CD4-positive, alpha-beta T cell (primary cell): ENCODE measurements at regions of chr22 and their contacts with region 1.

Region 1: DNA sequence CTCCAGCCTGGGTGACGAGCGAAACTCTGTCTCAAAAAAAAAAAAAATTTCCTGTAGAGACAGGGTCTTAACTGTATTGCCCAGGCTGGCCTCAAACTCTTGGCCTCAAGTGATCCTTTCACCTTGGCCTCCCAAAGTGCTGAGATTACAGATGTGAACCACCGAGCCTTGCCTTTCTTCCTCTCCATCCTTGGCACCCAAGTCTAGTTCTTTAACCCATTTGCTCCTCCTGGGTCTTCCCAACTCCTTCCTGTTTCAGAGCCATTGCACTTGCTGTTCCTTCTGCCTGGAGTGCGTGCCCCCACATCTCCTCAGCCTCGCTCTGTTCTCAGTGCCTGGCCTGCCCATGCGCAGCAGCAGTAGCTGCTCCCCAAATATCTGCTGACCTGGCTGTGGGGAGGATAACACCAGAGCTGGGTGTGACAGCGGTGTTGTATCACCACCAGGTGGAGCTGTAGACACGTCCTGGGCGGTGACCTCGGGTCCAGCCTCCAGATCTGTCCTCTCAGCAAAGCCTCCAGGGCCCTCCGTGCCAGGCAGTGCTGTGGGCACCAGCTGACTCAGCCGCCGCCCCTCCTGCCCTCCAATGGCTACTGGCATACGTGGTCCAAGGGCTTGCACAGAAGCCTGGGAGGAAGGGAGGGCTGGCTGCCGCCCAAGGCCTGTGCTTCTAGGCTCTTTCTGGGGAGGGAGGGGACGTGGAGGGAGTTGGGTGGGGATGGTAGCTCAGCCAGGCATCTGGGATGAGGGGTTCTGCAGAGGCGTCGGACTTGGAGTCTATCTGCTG is 22.0 kb downstream of the TEF start:
- DNase-seq: peak; percentile 69 to 91 (median 75)
- ATAC-seq: peak; percentile 99
- H3K4me3 ChIP-seq: no peak overlapping the region
- H3K4me3 Mint-ChIP-seq: no peak overlapping the region
- H3K27ac ChIP-seq: no peak overlapping the region
- H3K27ac Mint-ChIP-seq: no peak overlapping the region
- H3K4me1 ChIP-seq: peaks cover 11% of the 10 kb centered on the region
- H3K4me1 Mint-ChIP-seq: peaks cover 6% of the 10 kb centered on the region
- H3K27me3 ChIP-seq: no peaks in the 10 kb centered on the region
- H3K27me3 Mint-ChIP-seq: no peaks in the 10 kb centered on the region
- CTCF ChIP-seq: peak; percentile 96

Region 2: DNA sequence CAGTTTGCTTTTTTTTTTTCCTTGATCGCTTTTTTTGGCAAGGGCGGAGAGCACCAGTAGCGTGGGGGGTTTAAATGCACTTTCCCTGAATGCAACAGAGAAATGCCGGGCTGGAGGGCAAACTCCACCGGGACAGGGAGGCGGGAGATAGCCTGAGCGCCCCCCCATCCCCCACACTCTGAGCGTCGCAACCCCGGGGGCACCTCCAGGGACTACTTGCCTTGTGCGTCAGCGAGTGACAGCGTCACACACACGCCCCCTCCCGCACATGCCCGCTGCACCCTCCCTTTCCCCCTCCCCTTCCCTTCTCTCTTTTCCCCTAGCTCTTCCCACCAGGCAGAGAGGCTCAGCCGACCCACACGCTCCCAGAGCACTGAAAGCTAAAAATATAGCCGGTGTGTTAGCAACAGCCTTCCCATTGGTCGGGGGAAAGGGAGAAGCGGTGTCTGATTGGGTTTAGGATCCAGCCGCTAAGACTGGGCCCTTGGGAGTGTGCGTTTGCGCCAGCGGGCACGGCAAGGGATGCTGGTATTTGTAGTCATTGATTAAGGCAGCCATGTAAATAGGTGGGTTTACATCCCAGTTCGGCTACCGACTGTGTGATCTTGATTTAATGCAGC is 44.6 kb after region 1 on chr22:
- CTCF ChIA-PET with region 1: interaction called, 5 read pairs
- POLR2A ChIA-PET with region 1: interaction called, 18 read pairs
- intact Hi-C with region 1: no loop called
- DNase-seq: peak; percentile 79 to 97 (median 84)
- ATAC-seq: peak; percentile 73
- H3K4me3 ChIP-seq: peak overlapping the region; percentile 98
- H3K4me3 Mint-ChIP-seq: peak overlapping the region; percentile 94
- H3K27ac ChIP-seq: peak overlapping the region; percentile 97 to 98
- H3K27ac Mint-ChIP-seq: peak overlapping the region; percentile 95
- H3K4me1 ChIP-seq: peaks cover 41% of the 10 kb centered on the region
- H3K4me1 Mint-ChIP-seq: peaks cover 29% of the 10 kb centered on the region
- H3K27me3 ChIP-seq: no peaks in the 10 kb centered on the region
- H3K27me3 Mint-ChIP-seq: no peaks in the 10 kb centered on the region
- CTCF ChIP-seq: no peak

Region 3: DNA sequence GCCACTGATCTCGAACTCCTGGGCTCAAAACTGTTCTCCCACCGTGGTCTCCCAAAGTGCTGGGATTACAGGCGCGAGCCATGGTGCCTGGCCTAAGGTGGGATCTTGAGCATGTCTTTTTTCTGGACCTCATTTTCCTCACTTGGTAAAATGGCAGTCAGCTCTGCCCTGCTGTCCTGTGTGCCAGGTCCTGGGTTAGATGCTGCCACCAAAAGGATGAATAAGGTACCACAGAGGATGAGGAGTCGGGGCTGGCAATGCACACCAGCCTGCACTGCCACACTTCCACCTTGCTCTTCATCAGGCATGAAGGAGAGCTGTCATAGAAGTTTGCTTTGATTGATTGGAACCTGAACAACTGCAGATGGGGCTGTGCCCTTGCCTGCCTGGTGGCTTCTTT is 97.5 kb after region 1 on chr22:
- CTCF ChIA-PET with region 1: interaction called, 20 read pairs
- POLR2A ChIA-PET with region 1: interaction called, 3 read pairs
- intact Hi-C with region 1: no loop called
- DNase-seq: peak in 5 of 14 experiments; percentile 10 to 45 (median 32)
- ATAC-seq: peak; percentile 57
- H3K4me3 ChIP-seq: no peak overlapping the region
- H3K4me3 Mint-ChIP-seq: no peak overlapping the region
- H3K27ac ChIP-seq: no peak overlapping the region
- H3K27ac Mint-ChIP-seq: no peak overlapping the region
- H3K4me1 ChIP-seq: no peaks in the 10 kb centered on the region
- H3K4me1 Mint-ChIP-seq: no peaks in the 10 kb centered on the region
- H3K27me3 ChIP-seq: no peaks in the 10 kb centered on the region
- H3K27me3 Mint-ChIP-seq: no peaks in the 10 kb centered on the region
- CTCF ChIP-seq: no peak

Region 4: GRCh38 chr22:41517172-41518047 is 113.7 kb after region 1 on chr22:
- CTCF ChIA-PET with region 1: interaction called, 9 read pairs
- POLR2A ChIA-PET with region 1: interaction called, 3 read pairs
- intact Hi-C with region 1: loop called in 1 of 2 experiments (anchors 1 kb)
- DNase-seq: peak in 12 of 14 experiments; percentile 13 to 62 (median 30)
- ATAC-seq: no peak
- H3K4me3 ChIP-seq: no peak overlapping the region
- H3K4me3 Mint-ChIP-seq: no peak overlapping the region
- H3K27ac ChIP-seq: no peak overlapping the region
- H3K27ac Mint-ChIP-seq: no peak overlapping the region
- H3K4me1 ChIP-seq: no peaks in the 10 kb centered on the region
- H3K4me1 Mint-ChIP-seq: peaks cover under 1% of the 10 kb centered on the region
- H3K27me3 ChIP-seq: no peaks in the 10 kb centered on the region
- H3K27me3 Mint-ChIP-seq: no peaks in the 10 kb centered on the region
- CTCF ChIP-seq: peak; percentile 69

Region 5: GRCh38 chr22:41526837-41527799 is 123.4 kb after region 1 on chr22:
- CTCF ChIA-PET with region 1: interaction called, 54 read pairs
- POLR2A ChIA-PET with region 1: interaction called, 3 read pairs
- intact Hi-C with region 1: loop called (anchors 1 kb)
- DNase-seq: peak; percentile 57 to 82 (median 68)
- ATAC-seq: peak; percentile 65
- H3K4me3 ChIP-seq: no peak overlapping the region
- H3K4me3 Mint-ChIP-seq: no peak overlapping the region
- H3K27ac ChIP-seq: peak overlapping the region in 1 of 2 donors; percentile 60
- H3K27ac Mint-ChIP-seq: peak overlapping the region; percentile 47
- H3K4me1 ChIP-seq: peaks cover 28% of the 10 kb centered on the region
- H3K4me1 Mint-ChIP-seq: peaks cover 15% of the 10 kb centered on the region
- H3K27me3 ChIP-seq: no peaks in the 10 kb centered on the region
- H3K27me3 Mint-ChIP-seq: no peaks in the 10 kb centered on the region
- CTCF ChIP-seq: peak; percentile 80

Region 6: GRCh38 chr22:41596776-41597634 is 193.3 kb after region 1 on chr22:
- CTCF ChIA-PET with region 1: no interaction called
- POLR2A ChIA-PET with region 1: no interaction called
- intact Hi-C with region 1: loop called (anchors 1 to 2 kb)
- DNase-seq: peak in 11 of 14 experiments; percentile 11 to 63 (median 21)
- ATAC-seq: peak; percentile 71
- H3K4me3 ChIP-seq: no peak overlapping the region
- H3K4me3 Mint-ChIP-seq: no peak overlapping the region
- H3K27ac ChIP-seq: no peak overlapping the region
- H3K27ac Mint-ChIP-seq: no peak overlapping the region
- H3K4me1 ChIP-seq: no peaks in the 10 kb centered on the region
- H3K4me1 Mint-ChIP-seq: no peaks in the 10 kb centered on the region
- H3K27me3 ChIP-seq: no peaks in the 10 kb centered on the region
- H3K27me3 Mint-ChIP-seq: no peaks in the 10 kb centered on the region
- CTCF ChIP-seq: peak; percentile 50